PC-9 (cell line): ENCODE measurements at regions of chr20 and their contacts with region 1.

Region 1: GRCh38 chr20:47652775-47653174 is 132.5 kb downstream of the SULF2 start:
- DNase-seq: no peak
- H3K4me3 ChIP-seq: no peak overlapping the region
- H3K27ac ChIP-seq: peak overlapping the region; percentile 36; the same call in 1 of the 2 replicates
- H3K4me1 ChIP-seq: no peaks in the 10 kb centered on the region
- H3K27me3 ChIP-seq: no peaks in the 10 kb centered on the region
- CTCF ChIP-seq: no peak

Region 2: DNA sequence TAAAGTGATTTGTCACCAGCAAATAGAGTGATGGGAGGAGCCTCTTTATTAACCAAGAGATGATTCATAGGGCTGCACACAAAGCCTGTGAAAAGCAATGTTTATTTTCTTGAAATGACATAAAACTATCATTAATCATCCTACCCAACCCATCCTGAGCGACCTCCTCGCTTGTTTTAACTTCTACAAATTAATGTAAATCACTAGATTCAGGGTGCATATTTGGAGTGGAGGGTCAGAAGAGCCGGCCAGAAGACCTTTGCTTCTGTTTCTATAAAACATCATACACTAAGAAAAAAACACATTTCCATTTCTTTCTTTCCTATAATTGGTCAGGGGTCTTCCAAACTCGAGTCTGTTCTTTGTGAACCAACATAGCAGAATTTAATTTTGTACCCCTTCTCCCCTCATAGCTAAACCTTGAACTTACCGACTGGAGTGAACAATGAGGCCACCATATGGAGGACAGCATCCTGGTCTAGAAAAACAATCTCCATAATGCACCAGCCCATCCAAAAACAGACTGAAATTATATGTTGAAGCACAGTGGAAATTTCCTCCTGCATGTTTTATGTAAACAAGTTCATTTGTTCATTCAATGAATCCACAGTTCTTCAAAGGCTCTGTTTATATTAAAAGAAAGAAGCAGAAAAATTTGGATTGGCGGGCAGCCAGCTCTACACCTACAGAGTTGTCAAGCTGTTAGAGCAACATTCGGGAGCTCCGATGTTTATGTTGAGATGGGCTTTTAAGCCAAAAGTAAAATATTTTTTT is 527.6 kb after region 1 on chr20:
- CTCF ChIA-PET with region 1: no interaction called
- POLR2A ChIA-PET with region 1: interaction called, 28 read pairs
- intact Hi-C with region 1: no loop called
- DNase-seq: peak; percentile 50 to 91
- H3K4me3 ChIP-seq: peak overlapping the region; percentile 2; the same call in 1 of the 2 replicates
- H3K27ac ChIP-seq: peak overlapping the region; percentile 84
- H3K4me1 ChIP-seq: peaks cover 45% of the 10 kb centered on the region
- H3K27me3 ChIP-seq: no peaks in the 10 kb centered on the region
- CTCF ChIP-seq: no peak